ENCODE measurements at regions of chr14 and their contacts with region 1.

Region 1: GRCh38 chr14:95774265-95775160 is 60.6 kb upstream of the TCL1A start:
- DNase-seq: peak; percentile 16
- ATAC-seq: peak; percentile 76
- H3K4me3 ChIP-seq: no peak overlapping the region
- H3K27ac ChIP-seq: no peak overlapping the region
- H3K4me1 ChIP-seq: no peaks in the 10 kb centered on the region
- H3K27me3 ChIP-seq: no peaks in the 10 kb centered on the region
- CTCF ChIP-seq: peak; percentile 86 to 97 (median 92)
- EP300 ChIP-seq: no peak
- POLR2A ChIP-seq: no peak
- RAD21 ChIP-seq: peak; percentile 78

Region 2: GRCh38 chr14:95609387-95609990 is 165.0 kb before region 1 on chr14:
- CTCF ChIA-PET with region 1: interaction called, 37 read pairs
- POLR2A ChIA-PET with region 1: no interaction called
- RAD21 ChIA-PET with region 1: interaction called, 4 read pairs
- SMC1A ChIA-PET with region 1: interaction called, 4 read pairs
- in situ Hi-C with region 1: loop called (anchors 5 kb)
- intact Hi-C with region 1: loop called (anchors 1 kb)
- DNase-seq: no peak
- ATAC-seq: peak; percentile 83
- H3K4me3 ChIP-seq: no peak overlapping the region
- H3K27ac ChIP-seq: no peak overlapping the region
- H3K4me1 ChIP-seq: no peaks in the 10 kb centered on the region
- H3K27me3 ChIP-seq: no peaks in the 10 kb centered on the region; a peak in 1 of 4 replicates
- CTCF ChIP-seq: peak; percentile 67 to 71 (median 68)
- EP300 ChIP-seq: no peak
- POLR2A ChIP-seq: no peak
- RAD21 ChIP-seq: peak; percentile 84

Region 3: GRCh38 chr14:95697764-95698163 is 76.7 kb before region 1 on chr14:
- CTCF ChIA-PET with region 1: interaction called, 12 read pairs
- POLR2A ChIA-PET with region 1: no interaction called
- RAD21 ChIA-PET with region 1: interaction called, 3 read pairs
- SMC1A ChIA-PET with region 1: interaction called, 7 read pairs
- in situ Hi-C with region 1: no loop called
- intact Hi-C with region 1: no loop called
- DNase-seq: peak; percentile 56
- ATAC-seq: peak; percentile 66
- H3K4me3 ChIP-seq: peak overlapping the region; percentile 2; the same call in 1 of the 2 replicates
- H3K27ac ChIP-seq: peak overlapping the region; percentile 49
- H3K4me1 ChIP-seq: peaks cover 34% of the 10 kb centered on the region
- H3K27me3 ChIP-seq: no peaks in the 10 kb centered on the region
- CTCF ChIP-seq: peak in 1 of 3 experiments; percentile 23; a peak in 1 of 6 replicates
- EP300 ChIP-seq: peak; percentile 25 to 33; a peak in 1 of 4 replicates
- POLR2A ChIP-seq: no peak
- RAD21 ChIP-seq: no peak

Region 4: DNA sequence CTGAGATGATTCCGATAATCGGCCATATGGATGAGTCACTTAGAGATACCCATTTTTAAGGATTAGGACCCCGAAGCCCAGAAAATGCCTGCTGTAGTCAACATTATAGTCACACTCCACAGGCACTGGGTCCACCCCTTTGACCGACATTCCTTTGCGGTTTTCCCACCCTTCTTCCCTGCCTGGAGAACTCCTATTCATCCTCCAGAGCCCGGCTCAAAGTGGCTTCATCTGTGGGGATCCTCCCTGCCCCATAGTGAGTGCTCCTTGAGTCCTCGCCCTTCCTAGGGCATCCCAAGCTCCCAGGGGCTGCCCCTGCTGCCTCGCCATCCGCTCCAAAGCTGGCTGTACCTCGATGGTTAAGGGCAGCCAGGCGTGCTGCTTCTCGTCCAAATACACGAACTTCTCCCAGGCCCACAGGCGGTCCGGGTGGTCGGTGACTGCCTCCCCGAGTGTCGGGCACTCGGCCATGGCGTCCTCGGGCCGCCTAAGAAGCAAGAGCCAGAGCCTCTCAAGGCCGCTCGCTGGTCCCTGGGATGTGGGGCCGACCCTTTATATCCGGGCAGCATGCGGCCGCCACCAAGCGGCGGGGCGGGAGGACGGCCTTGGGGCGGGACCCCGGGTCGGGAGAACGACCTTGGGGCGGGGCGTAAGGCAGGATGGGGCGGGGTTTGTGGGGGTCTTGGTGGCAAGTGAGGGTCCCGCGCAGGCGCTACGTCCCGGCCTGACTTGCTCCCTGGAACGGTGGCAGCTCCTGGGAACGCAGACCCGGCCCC is 60.7 kb before region 1 on chr14 and contains the start of gene TCL1A:
- CTCF ChIA-PET with region 1: interaction called, 17 read pairs
- POLR2A ChIA-PET with region 1: no interaction called
- RAD21 ChIA-PET with region 1: interaction called, 3 read pairs
- SMC1A ChIA-PET with region 1: interaction called, 9 read pairs
- in situ Hi-C with region 1: no loop called
- intact Hi-C with region 1: loop called (anchors 1 kb)
- DNase-seq: no peak
- ATAC-seq: peak; percentile 95
- H3K4me3 ChIP-seq: peak within 1 kb of the TSS; percentile 84
- H3K27ac ChIP-seq: peak within 1 kb of the TSS; percentile 85
- H3K4me1 ChIP-seq: peaks cover 13% of the 10 kb centered on the region
- H3K27me3 ChIP-seq: no peaks in the 10 kb centered on the region
- CTCF ChIP-seq: peak; percentile 50 to 58 (median 58)
- EP300 ChIP-seq: no peak
- POLR2A ChIP-seq: peak; percentile 100
- RAD21 ChIP-seq: peak; percentile 69
- polyA plus RNA-seq, gene TCL1A: 36.5 to 51.6 TPM

Region 5: GRCh38 chr14:95725685-95726336 is 48.7 kb before region 1 on chr14:
- CTCF ChIA-PET with region 1: interaction called, 44 read pairs
- POLR2A ChIA-PET with region 1: no interaction called
- RAD21 ChIA-PET with region 1: interaction called, 6 read pairs
- SMC1A ChIA-PET with region 1: interaction called, 35 read pairs
- in situ Hi-C with region 1: no loop called
- intact Hi-C with region 1: loop called (anchors 1 kb)
- DNase-seq: peak; percentile 72
- ATAC-seq: peak; percentile 86
- H3K4me3 ChIP-seq: no peak overlapping the region
- H3K27ac ChIP-seq: peak overlapping the region; percentile 57
- H3K4me1 ChIP-seq: peaks cover 45% of the 10 kb centered on the region
- H3K27me3 ChIP-seq: no peaks in the 10 kb centered on the region
- CTCF ChIP-seq: peak in 1 of 3 experiments; percentile 54; a peak in 2 of 6 replicates
- EP300 ChIP-seq: peak in 1 of 2 experiments; percentile 28; a peak in 1 of 4 replicates
- POLR2A ChIP-seq: peak; percentile 24; the same call in 1 of the 2 replicates
- RAD21 ChIP-seq: peak; percentile 45; the same call in 1 of the 2 replicates

Region 6: DNA sequence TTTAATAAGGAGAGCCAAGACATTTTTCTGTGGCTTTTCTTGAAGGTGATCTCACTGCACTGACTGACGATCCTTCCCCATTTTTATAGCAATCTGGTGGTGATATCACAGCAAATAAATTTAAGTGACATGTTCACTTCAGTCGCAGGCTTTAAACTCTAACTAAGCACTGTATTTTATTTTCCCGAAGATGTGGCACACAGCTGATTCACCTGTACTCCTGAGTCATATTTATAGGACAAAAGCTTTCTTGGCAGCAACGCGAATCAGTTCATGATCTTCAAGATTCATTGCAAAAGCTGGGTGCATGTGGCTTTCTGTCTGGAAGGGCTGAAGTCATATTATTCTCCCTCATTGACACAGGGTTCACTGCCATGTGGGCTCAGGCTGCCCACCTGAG is 22.3 kb after region 1 on chr14:
- CTCF ChIA-PET with region 1: no interaction called
- POLR2A ChIA-PET with region 1: no interaction called
- RAD21 ChIA-PET with region 1: no interaction called
- SMC1A ChIA-PET with region 1: no interaction called
- in situ Hi-C with region 1: no loop called
- intact Hi-C with region 1: no loop called
- DNase-seq: no peak
- ATAC-seq: no peak
- H3K4me3 ChIP-seq: no peak overlapping the region
- H3K27ac ChIP-seq: no peak overlapping the region
- H3K4me1 ChIP-seq: no peaks in the 10 kb centered on the region
- H3K27me3 ChIP-seq: no peaks in the 10 kb centered on the region; a peak in 2 of 4 replicates
- CTCF ChIP-seq: no peak
- EP300 ChIP-seq: no peak
- POLR2A ChIP-seq: no peak
- RAD21 ChIP-seq: no peak

Region 7: DNA sequence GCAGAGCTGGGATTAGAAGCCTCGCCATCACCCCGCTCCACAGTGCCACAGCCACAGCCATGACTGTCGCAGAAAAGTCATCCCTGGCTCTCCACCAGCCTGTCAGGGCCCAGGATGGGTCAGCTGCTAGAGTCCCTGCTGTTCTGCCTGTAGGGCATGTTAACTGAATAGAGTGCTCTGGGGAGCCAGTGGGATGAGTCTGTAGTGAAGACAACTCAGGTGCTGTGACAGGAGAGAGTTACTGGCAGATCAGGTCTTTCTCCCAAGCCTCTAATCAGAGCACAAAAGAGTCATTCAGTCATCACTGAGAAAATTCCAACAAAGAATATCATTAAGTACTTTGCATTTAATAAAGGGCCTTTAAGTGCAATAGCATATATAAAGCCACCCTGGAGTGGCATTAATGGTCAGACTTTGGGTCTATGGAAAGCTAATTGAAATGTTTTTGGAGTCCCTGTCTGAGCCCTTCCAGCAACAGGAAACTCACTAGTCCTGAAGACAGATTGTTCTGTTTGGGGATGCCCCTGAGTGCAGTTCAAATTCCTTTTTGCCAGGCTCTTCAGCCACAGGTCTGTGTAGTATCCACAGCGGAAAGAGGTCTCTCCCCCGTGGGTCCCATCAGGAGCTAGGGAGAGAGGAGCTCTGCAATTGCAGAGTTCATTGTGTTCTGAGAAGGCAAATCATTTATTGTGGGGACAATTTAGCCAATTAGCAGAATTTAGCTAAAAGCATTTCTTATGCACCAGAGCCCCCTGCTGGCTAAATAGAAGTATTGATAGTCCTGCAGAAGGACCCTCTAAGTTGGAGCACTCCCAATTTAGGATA is 219.5 kb after region 1 on chr14:
- CTCF ChIA-PET with region 1: interaction called, 11 read pairs
- POLR2A ChIA-PET with region 1: no interaction called
- RAD21 ChIA-PET with region 1: interaction called, 4 read pairs
- SMC1A ChIA-PET with region 1: interaction called, 3 read pairs
- in situ Hi-C with region 1: no loop called
- intact Hi-C with region 1: loop called (anchors 5 kb)
- DNase-seq: peak; percentile 17
- ATAC-seq: peak; percentile 75
- H3K4me3 ChIP-seq: no peak overlapping the region
- H3K27ac ChIP-seq: no peak overlapping the region
- H3K4me1 ChIP-seq: no peaks in the 10 kb centered on the region
- H3K27me3 ChIP-seq: peaks cover 0 to 2% of the 10 kb centered on the region in 2 experiments; a peak in 2 of 4 replicates
- CTCF ChIP-seq: peak; percentile 78 to 80 (median 79)
- EP300 ChIP-seq: no peak
- POLR2A ChIP-seq: no peak
- RAD21 ChIP-seq: peak; percentile 93

Measured in GM12878 (cell line).